Activated CD4-positive, alpha-beta memory T cell treated with anti-CD3 and anti-CD28 coated beads, Interleukin-2, amount 10 ng/mL, durations not matched to agents 7 days and 5 days (primary cell): ENCODE measurements at regions of chr20 and their contacts with region 1.

Region 1: DNA sequence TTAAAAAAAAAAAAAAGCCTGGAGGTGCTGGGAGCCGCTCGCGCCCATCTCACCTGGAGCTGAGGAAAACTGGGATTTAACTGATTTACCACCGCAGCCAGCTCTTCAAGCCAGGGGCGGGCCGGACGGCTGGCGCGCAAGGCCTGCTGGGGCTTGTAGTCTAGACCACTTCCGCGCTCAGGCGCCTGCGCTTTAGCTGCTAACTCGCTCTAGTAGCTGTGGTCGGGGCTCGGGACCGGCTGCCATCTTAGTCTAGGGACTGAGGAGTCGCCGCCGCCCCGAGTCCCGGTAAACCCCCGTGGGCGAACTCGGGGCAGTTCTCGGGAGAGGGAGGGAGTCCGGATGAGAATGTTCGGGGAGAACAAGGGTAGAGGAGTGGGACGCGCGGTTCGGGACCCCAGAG is at the start of gene ITCH:
- DNase-seq: peak; percentile 94
- H3K4me3 Mint-ChIP-seq: peak within 1 kb of the TSS; percentile 96
- H3K27ac Mint-ChIP-seq: peak within 1 kb of the TSS; percentile 90
- H3K4me1 Mint-ChIP-seq: peaks cover 46% of the 10 kb centered on the region
- H3K27me3 Mint-ChIP-seq: peaks cover 3% of the 10 kb centered on the region
- total RNA-seq, gene ITCH: 55.5 to 56.7 TPM

Region 2: GRCh38 chr20:34302723-34303528 is 60.1 kb before region 1 on chr20 and contains the start of gene AHCY:
- CTCF ChIA-PET with region 1: no interaction called
- POLR2A ChIA-PET with region 1: interaction called, 13 read pairs
- DNase-seq: peak; percentile 95
- H3K4me3 Mint-ChIP-seq: peak within 1 kb of the TSS; percentile 91
- H3K27ac Mint-ChIP-seq: peak within 1 kb of the TSS; percentile 88
- H3K4me1 Mint-ChIP-seq: peaks cover 26% of the 10 kb centered on the region
- H3K27me3 Mint-ChIP-seq: peaks cover 3% of the 10 kb centered on the region
- total RNA-seq, gene AHCY: 50.5 to 53.0 TPM

Region 3: DNA sequence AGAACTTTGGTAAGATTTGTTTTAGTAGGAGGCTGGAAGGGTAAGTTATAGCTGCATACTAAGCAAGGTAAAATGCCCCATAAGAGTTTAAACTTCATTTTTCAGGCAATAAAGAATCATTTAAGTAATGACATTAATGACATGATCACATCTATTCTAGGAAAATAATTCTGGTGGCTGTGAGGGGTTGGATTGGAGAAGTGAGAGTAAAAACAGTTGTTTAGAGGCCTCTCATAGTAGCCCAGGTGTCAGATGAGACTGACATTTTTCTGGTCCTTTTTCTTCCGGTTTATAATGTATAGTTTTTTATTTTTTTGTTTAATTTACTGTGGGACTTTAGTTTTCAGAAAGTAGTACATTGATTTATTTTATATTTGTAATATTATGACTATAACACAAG is 40.8 kb after region 1 on chr20:
- CTCF ChIA-PET with region 1: interaction called, 4 read pairs
- POLR2A ChIA-PET with region 1: interaction called, 21 read pairs
- DNase-seq: no peak
- H3K4me3 Mint-ChIP-seq: no peak overlapping the region
- H3K27ac Mint-ChIP-seq: no peak overlapping the region
- H3K4me1 Mint-ChIP-seq: peaks cover 38% of the 10 kb centered on the region
- H3K27me3 Mint-ChIP-seq: no peaks in the 10 kb centered on the region

Region 4: GRCh38 chr20:34621383-34622367 is 258.6 kb after region 1 on chr20:
- CTCF ChIA-PET with region 1: no interaction called
- POLR2A ChIA-PET with region 1: no interaction called
- DNase-seq: no peak
- H3K4me3 Mint-ChIP-seq: no peak overlapping the region
- H3K27ac Mint-ChIP-seq: peak overlapping the region; percentile 53
- H3K4me1 Mint-ChIP-seq: peaks cover 34% of the 10 kb centered on the region
- H3K27me3 Mint-ChIP-seq: no peaks in the 10 kb centered on the region